Activated naive CD4-positive, alpha-beta T cell treated with anti-CD3 and anti-CD28 coated beads for 36 hours (primary cell): ENCODE measurements at regions of chr4 and their contacts with region 1.

Region 1: GRCh38 chr4:173516621-173517524 is 13.2 kb downstream of the HAND2 start:
- DNase-seq: no peak
- H3K4me3 Mint-ChIP-seq: peak overlapping the region; percentile 1
- H3K27ac Mint-ChIP-seq: no peak overlapping the region
- H3K4me1 Mint-ChIP-seq: peaks cover 14% of the 10 kb centered on the region
- H3K27me3 Mint-ChIP-seq: peaks cover 81% of the 10 kb centered on the region

Region 2: DNA sequence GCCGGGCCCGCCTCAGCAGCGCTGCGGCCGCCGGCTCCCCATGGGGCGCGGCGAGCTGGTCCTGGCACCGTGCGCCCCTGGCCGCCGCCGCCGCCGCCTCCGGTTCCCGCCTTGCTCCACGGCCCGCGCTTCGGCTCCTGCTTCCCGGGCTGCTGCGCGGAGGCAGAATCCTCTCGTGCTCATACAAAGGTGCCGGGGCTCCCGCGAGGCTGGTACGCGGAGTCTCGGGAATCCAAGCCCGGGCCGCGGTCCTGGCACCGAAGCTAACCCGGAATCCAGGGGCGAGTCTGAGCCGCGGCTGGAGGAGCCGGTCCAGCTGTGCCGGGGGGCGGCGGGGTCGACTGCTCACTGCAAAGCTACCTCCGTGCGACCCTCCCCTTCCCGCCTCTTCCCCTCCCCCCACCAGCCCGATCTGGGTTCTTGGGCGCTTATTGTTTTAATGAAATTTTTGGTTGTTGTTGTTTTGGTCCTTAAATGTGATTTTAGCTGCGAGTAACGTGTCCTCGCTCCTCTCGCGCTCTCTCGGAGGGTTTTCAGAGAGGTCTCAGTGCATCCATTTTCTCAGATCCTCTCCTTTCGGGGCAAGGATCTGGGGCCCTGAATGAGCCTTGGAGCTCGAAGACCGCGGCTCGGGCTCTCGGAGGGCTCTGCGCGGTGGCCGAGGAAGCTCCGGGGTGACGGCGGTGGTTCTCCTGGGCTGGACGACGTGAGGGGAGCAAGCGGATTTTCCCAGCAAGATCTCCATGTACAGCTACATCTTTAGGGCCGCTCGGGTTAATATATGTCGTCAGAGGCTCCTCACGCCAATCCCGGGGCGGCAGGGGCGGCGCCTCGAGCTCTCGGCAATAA is 12.8 kb after region 1 on chr4 and contains the start of gene HAND2:
- CTCF ChIA-PET with region 1: no interaction called
- intact Hi-C with region 1: loop called (anchors 1 kb)
- DNase-seq: no peak
- H3K4me3 Mint-ChIP-seq: peak within 1 kb of the TSS; percentile 67
- H3K27ac Mint-ChIP-seq: no peak within 1 kb of the TSS
- H3K4me1 Mint-ChIP-seq: peaks cover 18% of the 10 kb centered on the region
- H3K27me3 Mint-ChIP-seq: peaks cover 82% of the 10 kb centered on the region
- total RNA-seq, gene HAND2: not detected